Activated naive CD4-positive, alpha-beta T cell treated with anti-CD3 and anti-CD28 coated beads for 36 hours (primary cell): ENCODE measurements at regions of chr9 and their contacts with region 1.

Region 1: DNA sequence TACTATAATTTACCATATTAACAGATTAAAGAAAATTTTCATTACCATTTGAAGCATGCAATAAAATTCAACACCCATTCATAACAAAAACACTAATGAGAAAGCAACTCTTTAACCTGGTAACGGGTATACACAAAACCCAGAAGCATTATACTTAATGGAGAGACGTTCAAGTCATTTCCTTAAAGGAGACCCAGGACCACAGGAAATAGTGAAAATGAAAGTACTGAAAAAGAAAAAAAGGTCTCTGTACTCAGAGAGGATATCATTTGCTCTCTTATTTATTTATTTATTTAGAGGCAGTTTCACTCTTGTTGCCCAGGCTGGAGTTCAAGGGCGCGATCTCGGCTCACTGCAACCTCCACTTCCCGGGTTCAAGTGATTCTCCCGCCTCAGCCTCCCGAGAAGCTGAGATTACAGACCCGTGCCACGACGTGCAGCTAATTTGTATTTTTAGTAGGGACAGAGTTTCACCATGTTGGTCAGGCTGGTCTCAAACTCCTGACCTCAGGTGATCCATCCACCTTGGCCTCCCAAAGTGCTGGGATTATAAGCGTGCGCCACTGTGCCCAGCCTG is 61.6 kb downstream of the SETX start:
- DNase-seq: no peak
- H3K4me3 Mint-ChIP-seq: no peak overlapping the region
- H3K27ac Mint-ChIP-seq: peak overlapping the region; percentile 63
- H3K4me1 Mint-ChIP-seq: peaks cover 8% of the 10 kb centered on the region
- H3K27me3 Mint-ChIP-seq: no peaks in the 10 kb centered on the region

Region 2: GRCh38 chr9:132268725-132269352 is 24.4 kb before region 1 on chr9:
- CTCF ChIA-PET with region 1: interaction called, 12 read pairs
- intact Hi-C with region 1: no loop called
- DNase-seq: peak; percentile 88
- H3K4me3 Mint-ChIP-seq: no peak overlapping the region
- H3K27ac Mint-ChIP-seq: peak overlapping the region; percentile 75
- H3K4me1 Mint-ChIP-seq: peaks cover 12% of the 10 kb centered on the region
- H3K27me3 Mint-ChIP-seq: no peaks in the 10 kb centered on the region

Region 3: GRCh38 chr9:132327537-132327936 is 34.3 kb after region 1 on chr9:
- CTCF ChIA-PET with region 1: no interaction called
- intact Hi-C with region 1: loop called (anchors 5 kb)
- DNase-seq: no peak
- H3K4me3 Mint-ChIP-seq: no peak overlapping the region
- H3K27ac Mint-ChIP-seq: no peak overlapping the region
- H3K4me1 Mint-ChIP-seq: peaks cover 43% of the 10 kb centered on the region
- H3K27me3 Mint-ChIP-seq: no peaks in the 10 kb centered on the region